HepG2 (cell line): ENCODE measurements at regions of chr14 and their contacts with region 1.

Region 1: DNA sequence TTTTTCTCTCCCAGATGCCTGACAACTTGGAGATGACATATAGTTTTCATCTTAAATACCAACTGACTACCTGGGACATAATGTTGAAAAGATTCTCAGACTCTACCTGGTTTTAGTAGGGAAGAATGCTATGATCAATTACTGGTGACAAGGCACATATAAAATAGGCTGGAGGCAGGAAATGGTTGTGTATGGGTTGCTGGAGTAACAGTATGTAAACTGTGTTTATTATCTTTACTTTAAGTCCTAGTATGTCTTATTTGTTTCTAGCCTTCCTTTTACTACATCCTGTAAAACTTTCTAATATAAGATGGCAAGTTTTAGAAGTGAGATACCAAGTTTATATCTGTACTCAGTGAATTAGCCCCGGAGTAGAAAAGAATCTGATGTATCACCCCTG is 98.1 kb downstream of the NUBPL start:
- DNase-seq: no peak
- ATAC-seq: no peak
- H3K4me3 ChIP-seq: no peak overlapping the region
- H3K27ac ChIP-seq: no peak overlapping the region
- H3K4me1 ChIP-seq: no peaks in the 10 kb centered on the region
- H3K27me3 ChIP-seq: no peaks in the 10 kb centered on the region
- CTCF ChIP-seq: no peak
- EP300 ChIP-seq: no peak
- POLR2A ChIP-seq: no peak
- RAD21 ChIP-seq: no peak

Region 2: DNA sequence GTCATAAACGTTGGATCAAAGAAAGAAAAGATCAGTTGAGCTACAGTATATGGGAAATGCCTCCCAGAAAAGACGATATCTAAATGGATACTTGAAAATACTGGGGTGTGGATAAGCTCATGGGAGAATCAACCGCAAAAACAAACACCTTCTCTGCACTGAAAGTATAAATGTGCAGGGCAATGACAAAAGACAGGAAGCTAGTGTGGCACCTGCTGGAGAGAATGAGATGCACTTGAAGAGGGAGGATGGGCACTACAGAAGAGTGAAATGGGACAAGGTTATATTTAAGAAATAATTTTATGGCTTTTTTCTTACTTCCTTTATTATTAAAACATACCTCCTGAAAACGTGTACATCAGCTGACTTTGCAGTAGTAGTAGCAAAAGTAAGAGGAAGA is 1885.3 kb before region 1 on chr14:
- CTCF ChIA-PET with region 1: no interaction called
- POLR2A ChIA-PET with region 1: no interaction called
- in situ Hi-C with region 1: no loop called
- intact Hi-C with region 1: loop called (anchors 5 kb)
- DNase-seq: no peak
- ATAC-seq: no peak
- H3K4me3 ChIP-seq: no peak overlapping the region
- H3K27ac ChIP-seq: no peak overlapping the region
- H3K4me1 ChIP-seq: no peaks in the 10 kb centered on the region
- H3K27me3 ChIP-seq: no peaks in the 10 kb centered on the region
- CTCF ChIP-seq: no peak
- EP300 ChIP-seq: no peak
- POLR2A ChIP-seq: no peak
- RAD21 ChIP-seq: no peak

Region 3: DNA sequence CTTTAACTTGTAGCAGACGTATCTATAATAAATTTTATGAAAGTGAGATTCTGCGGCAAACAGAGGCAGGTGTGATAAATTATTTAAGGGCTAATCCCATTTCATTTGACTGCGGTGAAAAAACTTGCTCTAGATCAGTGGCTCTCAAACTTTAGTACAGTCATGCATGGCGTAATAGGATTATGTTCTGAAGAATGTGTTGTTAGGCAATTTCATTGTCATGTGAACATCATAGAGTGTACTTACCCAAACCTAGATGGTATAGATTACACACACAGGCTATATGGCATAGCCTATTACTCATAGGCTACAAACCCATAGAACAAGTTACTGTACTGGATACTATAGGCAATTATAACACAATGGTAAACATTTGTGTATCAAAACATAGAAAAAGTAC is 322.6 kb before region 1 on chr14:
- CTCF ChIA-PET with region 1: no interaction called
- POLR2A ChIA-PET with region 1: no interaction called
- in situ Hi-C with region 1: no loop called
- intact Hi-C with region 1: no loop called
- DNase-seq: peak; percentile 87
- ATAC-seq: peak; percentile 78
- H3K4me3 ChIP-seq: no peak overlapping the region
- H3K27ac ChIP-seq: no peak overlapping the region
- H3K4me1 ChIP-seq: peaks cover 13% of the 10 kb centered on the region
- H3K27me3 ChIP-seq: no peaks in the 10 kb centered on the region
- CTCF ChIP-seq: no peak
- EP300 ChIP-seq: peak in 1 of 2 experiments; percentile 25; a peak in 1 of 4 replicates
- POLR2A ChIP-seq: no peak
- RAD21 ChIP-seq: no peak

Region 4: GRCh38 chr14:31543969-31544799 is 115.1 kb before region 1 on chr14:
- CTCF ChIA-PET with region 1: no interaction called
- POLR2A ChIA-PET with region 1: no interaction called
- in situ Hi-C with region 1: no loop called
- intact Hi-C with region 1: no loop called
- DNase-seq: peak; percentile 48
- ATAC-seq: peak; percentile 98
- H3K4me3 ChIP-seq: no peak overlapping the region
- H3K27ac ChIP-seq: no peak overlapping the region
- H3K4me1 ChIP-seq: no peaks in the 10 kb centered on the region
- H3K27me3 ChIP-seq: no peaks in the 10 kb centered on the region
- CTCF ChIP-seq: peak; percentile 61
- EP300 ChIP-seq: no peak
- POLR2A ChIP-seq: no peak
- RAD21 ChIP-seq: no peak

Region 5: GRCh38 chr14:31596342-31597095 is 62.8 kb before region 1 on chr14:
- CTCF ChIA-PET with region 1: no interaction called
- POLR2A ChIA-PET with region 1: no interaction called
- in situ Hi-C with region 1: no loop called
- intact Hi-C with region 1: no loop called
- DNase-seq: no peak
- ATAC-seq: no peak
- H3K4me3 ChIP-seq: no peak overlapping the region
- H3K27ac ChIP-seq: no peak overlapping the region
- H3K4me1 ChIP-seq: peaks cover 16% of the 10 kb centered on the region
- H3K27me3 ChIP-seq: no peaks in the 10 kb centered on the region
- CTCF ChIP-seq: no peak
- EP300 ChIP-seq: no peak
- POLR2A ChIP-seq: no peak
- RAD21 ChIP-seq: no peak